SK-N-SH (cell line): ENCODE measurements at regions of chr19 and their contacts with region 1.

Region 1: DNA sequence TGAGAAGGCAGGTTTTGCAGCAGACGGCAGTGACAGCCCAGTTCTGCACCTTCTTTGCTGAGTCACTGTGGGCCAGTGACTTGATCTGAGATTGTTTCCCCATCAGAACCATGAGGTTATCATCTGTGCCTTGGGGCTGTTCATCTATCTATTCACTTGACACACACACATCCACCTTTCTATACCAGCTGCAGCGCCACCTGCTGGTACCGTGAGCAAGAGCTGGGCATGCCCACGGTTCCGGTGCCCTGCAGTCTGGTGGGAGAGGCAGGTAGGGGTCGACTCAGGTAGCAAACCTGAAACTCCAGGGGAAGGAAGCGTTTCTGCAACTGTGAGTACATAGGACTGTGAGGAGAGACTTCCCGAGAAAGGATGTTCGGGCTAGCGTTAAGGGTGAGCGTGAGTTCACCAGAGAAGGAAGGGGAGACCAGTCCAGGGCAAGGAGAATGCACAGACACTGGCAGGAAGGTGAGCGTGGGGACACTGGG is 7.5 kb upstream of the LIN7B start:
- DNase-seq: peak; percentile 80
- H3K4me3 ChIP-seq: no peak overlapping the region; a peak in 1 of 4 replicates
- H3K27ac ChIP-seq: no peak overlapping the region
- H3K4me1 ChIP-seq: peaks cover 3 to 13% of the 10 kb centered on the region in 2 experiments; a peak in 2 of 4 replicates
- H3K27me3 ChIP-seq: no peaks in the 10 kb centered on the region
- CTCF ChIP-seq: peak; percentile 90
- EP300 ChIP-seq: no peak
- RAD21 ChIP-seq: peak; percentile 41

Region 2: GRCh38 chr19:49085020-49085867 is 21.4 kb before region 1 on chr19 and contains the start of gene SNRNP70:
- CTCF ChIA-PET with region 1: interaction called, 19 read pairs
- POLR2A ChIA-PET with region 1: interaction called, 3 read pairs
- DNase-seq: peak; percentile 100
- H3K4me3 ChIP-seq: peak within 1 kb of the TSS; percentile 78 to 99
- H3K27ac ChIP-seq: peak within 1 kb of the TSS; percentile 77 to 89
- H3K4me1 ChIP-seq: peaks cover 10 to 12% of the 10 kb centered on the region in 2 experiments; a peak in 1 of 4 replicates
- H3K27me3 ChIP-seq: no peaks in the 10 kb centered on the region
- CTCF ChIP-seq: no peak
- EP300 ChIP-seq: no peak
- RAD21 ChIP-seq: no peak
- polyA plus RNA-seq, gene SNRNP70: 272 and 359 TPM in 2 replicates

Region 3: GRCh38 chr19:49118565-49119410 is 12.1 kb after region 1 on chr19 and contains the start of gene C19orf73:
- CTCF ChIA-PET with region 1: interaction called, 13 read pairs
- POLR2A ChIA-PET with region 1: interaction called, 3 read pairs
- DNase-seq: peak; percentile 99
- H3K4me3 ChIP-seq: peak within 1 kb of the TSS; percentile 61 to 69
- H3K27ac ChIP-seq: peak within 1 kb of the TSS; percentile 82 to 93
- H3K4me1 ChIP-seq: peaks cover 5 to 21% of the 10 kb centered on the region in 2 experiments; a peak in 1 of 4 replicates
- H3K27me3 ChIP-seq: no peaks in the 10 kb centered on the region
- CTCF ChIP-seq: 0 out of 2 replicates have a peak, but pooled peaks have one; percentile 13
- EP300 ChIP-seq: no peak
- RAD21 ChIP-seq: no peak
- polyA plus RNA-seq, gene C19orf73: 2.6 and 3.0 TPM in 2 replicates

Region 4: DNA sequence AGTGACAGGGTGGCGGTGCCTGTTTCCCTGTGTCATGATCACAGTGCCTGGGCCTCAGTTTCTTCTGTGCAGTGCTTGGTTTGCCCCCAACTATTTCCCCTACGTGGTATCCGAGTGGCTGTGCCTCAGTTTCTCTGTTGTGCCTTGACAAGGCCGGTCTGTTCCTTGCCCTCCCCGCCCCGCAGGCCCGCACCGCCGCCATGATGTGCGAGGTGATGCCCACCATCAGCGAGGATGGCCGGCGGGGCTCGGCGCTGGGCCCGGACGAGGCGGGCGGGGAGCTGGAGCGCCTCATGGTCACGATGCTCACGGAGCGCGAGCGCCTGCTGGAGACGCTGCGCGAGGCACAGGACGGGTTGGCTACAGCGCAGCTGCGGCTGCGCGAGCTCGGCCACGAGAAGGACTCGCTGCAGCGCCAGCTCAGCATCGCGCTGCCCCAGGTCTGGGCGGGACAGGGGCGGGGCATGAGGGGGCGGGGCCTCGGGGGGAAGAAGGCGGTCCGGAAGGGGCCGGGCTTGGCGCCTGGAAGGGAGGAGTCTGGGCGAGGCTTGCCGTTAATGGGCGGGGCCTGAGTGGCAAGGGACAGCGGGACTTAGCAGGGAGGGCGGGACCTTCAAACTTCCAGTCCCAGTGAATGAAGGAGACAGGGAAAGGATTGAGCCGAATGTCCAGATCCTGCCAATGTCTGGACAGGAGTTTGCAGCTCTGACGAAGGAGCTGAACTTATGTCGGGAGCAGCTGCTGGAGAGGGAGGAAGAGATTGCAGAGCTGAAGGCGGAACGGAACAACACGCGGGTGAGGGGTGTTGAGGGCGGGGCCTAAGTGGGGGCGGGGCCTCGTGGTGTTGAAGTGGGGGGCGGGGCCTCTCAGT is 21.2 kb after region 1 on chr19:
- CTCF ChIA-PET with region 1: interaction called, 11 read pairs
- POLR2A ChIA-PET with region 1: no interaction called
- DNase-seq: peak; percentile 99
- H3K4me3 ChIP-seq: peak overlapping the region; percentile 36 to 47; a peak in 3 of 4 replicates
- H3K27ac ChIP-seq: peak overlapping the region; percentile 30 to 73; a peak in 3 of 4 replicates
- H3K4me1 ChIP-seq: peaks cover 10 to 11% of the 10 kb centered on the region in 2 experiments; a peak in 2 of 4 replicates
- H3K27me3 ChIP-seq: no peaks in the 10 kb centered on the region
- CTCF ChIP-seq: peak; percentile 13; the same call in 1 of the 2 replicates
- EP300 ChIP-seq: no peak
- RAD21 ChIP-seq: peak; percentile 22; the same call in 1 of the 2 replicates

Region 5: DNA sequence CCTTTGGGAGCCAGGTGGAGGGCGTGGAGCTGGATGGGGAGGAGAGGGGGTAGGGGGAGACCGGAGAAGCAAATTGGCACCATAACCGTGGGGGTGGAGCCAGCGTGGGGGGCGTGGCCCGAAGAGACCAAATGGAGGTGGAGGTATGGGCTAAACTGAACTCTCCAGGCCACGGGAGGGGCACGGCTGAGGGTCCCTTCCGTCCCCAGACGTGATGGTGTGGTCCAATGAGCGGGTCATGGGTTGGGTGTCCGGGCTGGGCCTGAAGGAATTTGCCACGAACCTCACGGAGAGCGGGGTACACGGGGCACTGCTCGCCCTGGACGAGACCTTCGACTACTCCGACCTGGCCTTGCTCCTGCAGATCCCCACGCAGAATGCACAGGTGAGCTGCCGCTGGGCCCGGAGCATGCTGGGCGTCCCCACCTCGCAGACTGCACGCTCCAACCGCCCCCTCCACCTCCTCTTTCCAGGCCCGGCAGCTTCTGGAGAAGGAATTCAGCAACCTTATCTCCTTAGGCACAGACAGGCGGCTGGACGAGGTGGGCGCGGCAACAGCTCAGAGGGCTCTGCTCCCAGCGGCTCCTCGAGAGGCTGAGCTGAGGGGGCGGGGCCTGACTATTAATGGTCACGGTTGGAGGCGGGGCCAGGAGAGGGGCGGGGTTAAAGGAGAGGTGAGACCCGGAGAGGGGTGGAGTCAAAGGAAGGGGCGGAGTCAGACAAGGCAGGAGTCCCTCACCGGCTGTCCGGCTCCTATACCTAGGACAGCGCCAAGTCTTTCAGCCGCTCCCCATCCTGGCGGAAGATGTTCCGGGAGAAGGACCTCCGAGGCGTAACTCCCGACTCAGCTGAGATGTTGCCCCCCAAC is 42.3 kb after region 1 on chr19:
- CTCF ChIA-PET with region 1: interaction called, 12 read pairs
- POLR2A ChIA-PET with region 1: interaction called, 3 read pairs
- DNase-seq: peak; percentile 94
- H3K4me3 ChIP-seq: peak overlapping the region; percentile 91 to 96
- H3K27ac ChIP-seq: peak overlapping the region; percentile 68 to 87; a peak in 3 of 4 replicates
- H3K4me1 ChIP-seq: peaks cover 3 to 27% of the 10 kb centered on the region in 2 experiments; a peak in 2 of 4 replicates
- H3K27me3 ChIP-seq: no peaks in the 10 kb centered on the region
- CTCF ChIP-seq: no peak
- EP300 ChIP-seq: no peak
- RAD21 ChIP-seq: no peak

Region 6: GRCh38 chr19:49210108-49210900 is 103.6 kb after region 1 on chr19:
- CTCF ChIA-PET with region 1: interaction called, 14 read pairs
- POLR2A ChIA-PET with region 1: no interaction called
- DNase-seq: peak; percentile 69
- H3K4me3 ChIP-seq: no peak overlapping the region; a peak in 1 of 4 replicates
- H3K27ac ChIP-seq: no peak overlapping the region
- H3K4me1 ChIP-seq: no peaks in the 10 kb centered on the region; a peak in 1 of 4 replicates
- H3K27me3 ChIP-seq: no peaks in the 10 kb centered on the region
- CTCF ChIP-seq: no peak
- EP300 ChIP-seq: no peak
- RAD21 ChIP-seq: no peak